ENCODE measurements at regions of chr12 and their contacts with region 1.

Region 1: DNA sequence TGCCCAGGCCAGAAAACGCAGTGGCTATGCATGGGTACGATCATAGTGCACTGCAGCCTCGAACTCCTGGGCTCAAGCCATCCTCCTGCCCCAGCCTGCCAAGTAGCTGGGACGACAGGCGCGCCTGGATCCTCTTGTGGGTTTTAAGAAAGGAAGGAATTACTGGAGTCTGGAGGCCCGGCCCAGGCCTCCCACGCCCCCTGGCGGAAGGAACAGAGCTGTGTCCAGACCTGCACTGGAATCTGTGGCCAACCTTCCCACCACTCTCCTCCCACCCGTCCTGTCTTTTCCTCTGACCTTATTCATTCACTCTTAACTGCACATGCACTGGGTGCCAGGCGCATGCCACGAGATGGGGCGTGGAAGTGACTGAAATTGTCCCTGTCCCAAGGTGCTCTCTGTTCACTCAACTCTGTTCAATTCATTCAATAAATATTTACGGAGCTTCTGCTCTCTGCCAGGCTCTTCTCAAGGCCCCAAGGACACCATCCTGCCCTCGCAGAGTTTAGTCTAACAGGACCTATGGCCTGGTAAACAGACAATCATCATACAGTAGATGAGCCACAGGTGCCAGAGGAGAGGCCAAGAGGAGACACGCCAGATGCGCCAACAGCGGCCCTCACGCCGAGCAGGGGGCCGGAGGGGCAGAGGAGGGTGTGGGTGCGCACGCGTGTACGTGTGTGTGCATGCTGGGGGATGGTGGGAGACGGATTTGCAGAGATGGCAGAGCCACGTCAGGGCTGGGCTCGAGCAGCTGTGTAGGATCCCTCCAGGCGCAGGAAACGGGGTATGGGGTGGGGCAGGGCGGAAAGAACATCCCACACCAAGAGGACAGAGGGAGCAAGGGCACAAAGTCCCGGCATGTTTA is 13.7 kb upstream of the TMEM106C start:
- DNase-seq: peak; percentile 63 to 79
- ATAC-seq: peak; percentile 80 to 93 (median 88)
- H3K4me3 ChIP-seq: no peak overlapping the region
- H3K27ac ChIP-seq: no peak overlapping the region
- H3K4me1 ChIP-seq: peaks cover 0 to 14% (median 4%) of the 10 kb centered on the region in 9 donors
- H3K27me3 ChIP-seq: peaks cover 0 to 4% (median 0%) of the 10 kb centered on the region in 7 donors
- CTCF ChIP-seq: peak; percentile 74 to 90 (median 86)

Region 2: GRCh38 chr12:47858511-47859266 is 91.0 kb before region 1 on chr12:
- intact Hi-C with region 1: loop called in 2 of 10 experiments (anchors 10 kb)
- DNase-seq: no peak
- ATAC-seq: peak in 1 of 8 donors; percentile 8
- H3K4me3 ChIP-seq: no peak overlapping the region
- H3K27ac ChIP-seq: no peak overlapping the region
- H3K4me1 ChIP-seq: no peaks in the 10 kb centered on the region
- H3K27me3 ChIP-seq: no peaks in the 10 kb centered on the region
- CTCF ChIP-seq: no peak

Region 3: GRCh38 chr12:47868552-47869031 is 81.1 kb before region 1 on chr12:
- intact Hi-C with region 1: loop called in 1 of 10 experiments (anchors 10 kb)
- DNase-seq: no peak
- ATAC-seq: no peak
- H3K4me3 ChIP-seq: no peak overlapping the region
- H3K27ac ChIP-seq: peak overlapping the region in 1 of 10 donors; percentile 78
- H3K4me1 ChIP-seq: peaks cover 0 to 41% (median 9%) of the 10 kb centered on the region in 9 donors
- H3K27me3 ChIP-seq: no peaks in the 10 kb centered on the region
- CTCF ChIP-seq: no peak

Region 4: GRCh38 chr12:47904713-47905310 is 44.9 kb before region 1 on chr12 and contains the start of gene VDR:
- intact Hi-C with region 1: loop called in 7 of 10 experiments (anchors 2 to 10 kb)
- DNase-seq: peak; percentile 45 to 72
- ATAC-seq: peak; percentile 80 to 88 (median 84)
- H3K4me3 ChIP-seq: peak within 1 kb of the TSS; percentile 32 to 72 (median 52)
- H3K27ac ChIP-seq: peak within 1 kb of the TSS in 1 of 10 donors; percentile 85
- H3K4me1 ChIP-seq: peaks cover 3 to 57% (median 19%) of the 10 kb centered on the region in 9 donors
- H3K27me3 ChIP-seq: peaks cover 0 to 43% (median 28%) of the 10 kb centered on the region in 7 donors
- CTCF ChIP-seq: peak in 1 of 9 donors; percentile 23
- total RNA-seq, gene VDR: 0.08 to 3.0 (median 0.31) TPM

Region 5: GRCh38 chr12:47967461-47968321 is 18.0 kb after region 1 on chr12:
- intact Hi-C with region 1: no loop called
- DNase-seq: no peak
- ATAC-seq: peak in 2 of 8 donors; percentile 14
- H3K4me3 ChIP-seq: no peak overlapping the region
- H3K27ac ChIP-seq: peak overlapping the region in 3 of 10 donors; percentile 2 to 43 (median 35)
- H3K4me1 ChIP-seq: peaks cover 0 to 70% (median 24%) of the 10 kb centered on the region in 9 donors
- H3K27me3 ChIP-seq: no peaks in the 10 kb centered on the region
- CTCF ChIP-seq: no peak

Measured in heart right ventricle (tissue), 16 donors.